ENCODE measurements at regions of chr7 and their contacts with region 1.

Region 1: DNA sequence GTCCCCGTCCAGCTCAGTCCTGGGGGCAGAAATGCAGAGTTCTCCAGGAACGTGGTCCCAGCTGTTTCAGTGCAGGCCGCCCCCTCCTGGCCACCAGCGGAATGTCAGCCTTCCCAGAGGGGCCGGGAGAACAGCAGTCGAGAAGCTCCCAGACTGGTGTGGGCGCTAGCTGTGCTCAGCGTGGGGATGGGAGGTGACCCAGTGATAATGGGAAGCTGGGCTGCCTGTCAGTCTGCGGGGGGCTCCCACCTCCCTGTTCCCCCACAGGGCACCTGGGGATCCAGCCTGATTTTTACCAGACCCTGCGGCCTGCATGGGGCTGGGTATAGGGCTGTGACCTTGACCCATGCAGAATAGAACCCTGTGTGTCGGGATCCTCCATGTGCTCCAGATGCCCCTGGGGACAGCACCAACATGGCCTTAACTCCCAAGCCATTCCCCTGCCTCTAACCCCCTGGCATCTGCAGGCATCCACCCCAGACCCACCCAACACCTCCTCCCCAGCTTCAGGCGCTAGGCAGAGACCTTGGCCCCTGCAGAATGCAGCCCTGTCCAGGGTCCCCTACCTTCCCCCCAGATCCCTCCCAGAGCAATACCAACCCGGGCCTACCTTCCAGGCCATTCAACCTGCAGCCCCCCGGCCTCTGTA is 946 bp upstream of the ELN start:
- DNase-seq: peak; percentile 87
- ATAC-seq: peak; percentile 79
- H3K4me3 ChIP-seq: peak overlapping the region; percentile 61
- H3K27ac ChIP-seq: peak overlapping the region; percentile 87
- H3K4me1 ChIP-seq: peaks cover 30% of the 10 kb centered on the region
- H3K27me3 ChIP-seq: peaks cover 5% of the 10 kb centered on the region
- CTCF ChIP-seq: peak; percentile 94

Region 2: GRCh38 chr7:73865738-73866445 is 161.1 kb before region 1 on chr7:
- intact Hi-C with region 1: loop called (anchors 10 kb)
- DNase-seq: no peak
- ATAC-seq: peak; percentile 67
- H3K4me3 ChIP-seq: no peak overlapping the region
- H3K27ac ChIP-seq: no peak overlapping the region
- H3K4me1 ChIP-seq: peaks cover 19% of the 10 kb centered on the region
- H3K27me3 ChIP-seq: no peaks in the 10 kb centered on the region
- CTCF ChIP-seq: peak; percentile 68